ENCODE measurements at regions of chr10 and their contacts with region 1.

Region 1: GRCh38 chr10:22340362-22341189 is 4.7 kb upstream of the SPAG6 start:
- DNase-seq: peak; percentile 86 to 90 (median 88)
- ATAC-seq: peak; percentile 92
- H3K4me3 ChIP-seq: peak overlapping the region; percentile 69
- H3K27ac ChIP-seq: peak overlapping the region; percentile 91
- H3K4me1 ChIP-seq: peaks cover 13 to 14% of the 10 kb centered on the region in 2 experiments; a peak in 4 of 5 replicates
- H3K27me3 ChIP-seq: no peaks in the 10 kb centered on the region
- CTCF ChIP-seq: no peak
- EP300 ChIP-seq: no peak; the same call in 1 of the 2 replicates
- POLR2A ChIP-seq: peak; percentile 81
- RAD21 ChIP-seq: no peak; a peak in 1 of 4 replicates

Region 2: GRCh38 chr10:22325272-22326144 is 15.1 kb before region 1 on chr10:
- CTCF ChIA-PET with region 1: no interaction called
- POLR2A ChIA-PET with region 1: interaction called, 17 read pairs
- in situ Hi-C with region 1: no loop called
- intact Hi-C with region 1: loop called (anchors 1 kb)
- DNase-seq: peak; percentile 81 to 90 (median 85)
- ATAC-seq: peak; percentile 47
- H3K4me3 ChIP-seq: peak overlapping the region; percentile 50
- H3K27ac ChIP-seq: peak overlapping the region; percentile 68
- H3K4me1 ChIP-seq: peaks cover 6 to 21% of the 10 kb centered on the region in 2 experiments; a peak in 3 of 5 replicates
- H3K27me3 ChIP-seq: peaks cover 6 to 7% of the 10 kb centered on the region in 2 experiments; a peak in 3 of 5 replicates
- CTCF ChIP-seq: no peak
- EP300 ChIP-seq: no peak
- POLR2A ChIP-seq: no peak
- RAD21 ChIP-seq: peak in 1 of 2 experiments; percentile 14; a peak in 1 of 4 replicates

Region 3: GRCh38 chr10:22391600-22391999 is 51.0 kb after region 1 on chr10:
- CTCF ChIA-PET with region 1: no interaction called
- POLR2A ChIA-PET with region 1: interaction called, 3 read pairs
- in situ Hi-C with region 1: no loop called
- intact Hi-C with region 1: loop called (anchors 2 kb)
- DNase-seq: peak in 2 of 4 experiments; percentile 38 to 85
- ATAC-seq: peak; percentile 83
- H3K4me3 ChIP-seq: peak overlapping the region; percentile 34
- H3K27ac ChIP-seq: peak overlapping the region; percentile 58
- H3K4me1 ChIP-seq: peaks cover 0 to 21% of the 10 kb centered on the region in 2 experiments; a peak in 2 of 5 replicates
- H3K27me3 ChIP-seq: no peaks in the 10 kb centered on the region
- CTCF ChIP-seq: no peak
- EP300 ChIP-seq: peak; percentile 33; the same call in 1 of the 2 replicates
- POLR2A ChIP-seq: no peak; the same call in 1 of the 2 replicates
- RAD21 ChIP-seq: no peak

Region 4: GRCh38 chr10:22417736-22418268 is 77.2 kb after region 1 on chr10:
- CTCF ChIA-PET with region 1: no interaction called
- POLR2A ChIA-PET with region 1: no interaction called
- in situ Hi-C with region 1: no loop called
- intact Hi-C with region 1: loop called (anchors 5 kb)
- DNase-seq: no peak
- ATAC-seq: peak; percentile 76
- H3K4me3 ChIP-seq: no peak overlapping the region
- H3K27ac ChIP-seq: no peak overlapping the region
- H3K4me1 ChIP-seq: no peaks in the 10 kb centered on the region; a peak in 1 of 5 replicates
- H3K27me3 ChIP-seq: no peaks in the 10 kb centered on the region
- CTCF ChIP-seq: no peak
- EP300 ChIP-seq: no peak
- POLR2A ChIP-seq: no peak
- RAD21 ChIP-seq: 0 out of 4 replicates have a peak, but pooled peaks of 1 of the 2 experiments have one; percentile 3

Measured in K562 (cell line).